ENCODE measurements at regions of chr10 and their contacts with region 1.

Region 1: DNA sequence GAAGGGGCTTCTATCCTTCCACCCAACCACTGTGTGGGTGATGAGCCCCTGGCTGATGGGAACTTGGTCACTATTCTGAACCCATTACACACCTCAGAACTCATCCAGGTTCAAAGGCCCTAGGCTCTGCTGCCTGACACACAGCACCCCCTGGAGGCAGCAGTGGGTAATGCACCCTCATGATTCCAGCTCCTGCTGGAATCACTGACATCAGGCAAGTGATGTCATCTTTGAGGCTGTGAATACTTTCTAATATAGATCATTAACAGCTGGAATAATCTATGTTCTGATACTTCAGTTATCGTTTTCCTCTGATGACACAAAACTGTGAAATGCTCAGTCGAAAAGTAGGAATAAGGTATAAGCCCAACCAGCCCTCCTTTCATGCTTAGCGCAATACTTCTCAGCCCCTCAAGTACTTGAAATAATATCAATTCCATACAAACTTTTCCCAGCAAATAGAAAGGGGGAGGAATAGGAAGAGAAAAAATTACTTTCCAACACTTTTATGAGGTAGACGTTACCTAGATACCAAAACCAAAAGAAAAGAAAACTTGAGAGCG is 7.5 kb upstream of the RBP3 start:
- DNase-seq: peak; percentile 64
- H3K4me3 ChIP-seq: no peak overlapping the region
- H3K27ac ChIP-seq: no peak overlapping the region
- H3K4me1 ChIP-seq: no peaks in the 10 kb centered on the region
- H3K27me3 ChIP-seq: peaks cover 0 to 8% of the 10 kb centered on the region in 2 experiments
- CTCF ChIP-seq: peak; percentile 91 to 97
- POLR2A ChIP-seq: no peak

Region 2: GRCh38 chr10:47024399-47025252 is 316.1 kb before region 1 on chr10:
- CTCF ChIA-PET with region 1: interaction called, 6 read pairs
- POLR2A ChIA-PET with region 1: no interaction called
- dilution Hi-C with region 1: no loop called
- intact Hi-C with region 1: loop called (anchors 1 kb)
- DNase-seq: peak; percentile 45
- H3K4me3 ChIP-seq: no peak overlapping the region
- H3K27ac ChIP-seq: no peak overlapping the region
- H3K4me1 ChIP-seq: no peaks in the 10 kb centered on the region
- H3K27me3 ChIP-seq: no peaks in the 10 kb centered on the region
- CTCF ChIP-seq: peak; percentile 66 to 87
- POLR2A ChIP-seq: no peak

Region 3: DNA sequence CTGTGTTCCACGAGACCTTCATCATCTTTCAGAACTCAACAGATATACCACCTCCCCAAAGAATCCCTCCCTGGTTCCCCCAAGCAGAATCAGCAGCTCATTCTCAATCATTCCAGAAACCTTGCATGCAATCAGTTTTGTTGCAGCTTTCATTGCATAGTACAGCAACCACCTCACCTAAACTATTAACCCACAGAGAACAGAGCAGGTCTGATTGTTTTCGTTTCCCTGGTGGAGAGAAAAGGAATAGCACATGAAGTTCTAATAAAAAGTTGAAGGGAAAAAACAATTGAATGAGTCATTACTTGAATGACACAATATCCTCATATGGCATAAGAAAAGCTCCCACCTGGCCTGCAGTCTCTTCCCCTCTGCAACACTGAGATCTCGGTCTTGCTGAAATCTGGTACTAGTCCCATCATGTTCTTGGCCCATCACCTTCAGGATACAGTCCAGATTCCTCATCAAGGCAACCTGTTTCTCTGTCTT is 187.8 kb before region 1 on chr10:
- CTCF ChIA-PET with region 1: no interaction called
- POLR2A ChIA-PET with region 1: no interaction called
- dilution Hi-C with region 1: no loop called
- intact Hi-C with region 1: no loop called
- DNase-seq: peak; percentile 8
- H3K4me3 ChIP-seq: no peak overlapping the region
- H3K27ac ChIP-seq: no peak overlapping the region
- H3K4me1 ChIP-seq: no peaks in the 10 kb centered on the region
- H3K27me3 ChIP-seq: no peaks in the 10 kb centered on the region
- CTCF ChIP-seq: peak; percentile 1 to 12
- POLR2A ChIP-seq: no peak